ENCODE measurements at regions of chr6 and their contacts with region 1.

Region 1: GRCh38 chr6:87393022-87393622 is 14.7 kb upstream of the CFAP206 start:
- DNase-seq: peak; percentile 49
- H3K4me3 Mint-ChIP-seq: no peak overlapping the region
- H3K27ac Mint-ChIP-seq: no peak overlapping the region
- H3K4me1 Mint-ChIP-seq: no peaks in the 10 kb centered on the region
- H3K27me3 Mint-ChIP-seq: no peaks in the 10 kb centered on the region

Region 2: GRCh38 chr6:87066449-87067333 is 326.4 kb before region 1 on chr6:
- CTCF ChIA-PET with region 1: interaction called, 4 read pairs
- POLR2A ChIA-PET with region 1: interaction called, 3 read pairs
- intact Hi-C with region 1: loop called (anchors 5 kb)
- DNase-seq: peak; percentile 51
- H3K4me3 Mint-ChIP-seq: no peak overlapping the region
- H3K27ac Mint-ChIP-seq: no peak overlapping the region
- H3K4me1 Mint-ChIP-seq: peaks cover 2% of the 10 kb centered on the region
- H3K27me3 Mint-ChIP-seq: peaks cover 2% of the 10 kb centered on the region

Region 3: DNA sequence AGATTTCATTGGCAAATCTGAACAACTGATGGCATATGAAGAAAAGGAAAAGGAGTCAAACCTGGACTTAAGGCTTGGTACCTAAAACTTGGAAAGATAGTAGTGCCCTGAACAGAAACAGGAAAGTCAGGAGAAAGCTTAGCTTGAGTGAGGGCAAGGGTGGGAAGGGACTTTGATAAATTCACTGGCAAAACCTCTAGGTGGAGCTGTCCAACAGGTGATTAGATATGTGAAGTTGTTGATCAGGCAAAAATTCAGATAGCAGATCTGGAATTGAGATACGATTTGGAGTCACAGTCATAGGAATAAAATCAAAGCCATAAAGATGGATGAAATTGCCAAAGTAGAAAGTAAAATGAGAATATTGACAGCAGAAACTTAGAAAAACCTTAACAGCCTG is 253.9 kb before region 1 on chr6:
- CTCF ChIA-PET with region 1: interaction called, 18 read pairs
- POLR2A ChIA-PET with region 1: no interaction called
- intact Hi-C with region 1: loop called (anchors 1 kb)
- DNase-seq: no peak
- H3K4me3 Mint-ChIP-seq: no peak overlapping the region
- H3K27ac Mint-ChIP-seq: no peak overlapping the region
- H3K4me1 Mint-ChIP-seq: peaks cover 2% of the 10 kb centered on the region
- H3K27me3 Mint-ChIP-seq: peaks cover 4% of the 10 kb centered on the region

Region 4: DNA sequence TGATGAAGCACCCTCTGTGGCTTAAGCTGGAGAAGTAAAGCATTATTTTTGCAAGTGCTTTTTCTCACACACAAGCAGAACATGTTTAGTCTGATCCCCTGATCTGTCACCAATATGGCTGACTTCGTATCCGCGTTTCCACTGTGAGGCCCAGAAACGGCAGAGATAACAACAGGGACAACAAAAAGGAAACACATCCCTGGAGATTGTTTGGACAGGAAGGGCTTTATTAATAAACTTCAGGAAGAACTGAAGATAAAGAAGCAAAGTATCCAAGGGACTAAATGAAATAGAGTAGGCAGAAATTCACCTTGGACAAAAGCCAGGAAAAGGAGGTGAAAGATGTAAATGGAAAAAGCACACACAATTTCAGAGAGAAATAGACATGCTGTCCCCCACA is 147.4 kb after region 1 on chr6:
- CTCF ChIA-PET with region 1: no interaction called
- POLR2A ChIA-PET with region 1: no interaction called
- intact Hi-C with region 1: no loop called
- DNase-seq: no peak
- H3K4me3 Mint-ChIP-seq: no peak overlapping the region
- H3K27ac Mint-ChIP-seq: no peak overlapping the region
- H3K4me1 Mint-ChIP-seq: no peaks in the 10 kb centered on the region
- H3K27me3 Mint-ChIP-seq: no peaks in the 10 kb centered on the region

Region 5: GRCh38 chr6:87697581-87698552 is 304.7 kb after region 1 on chr6:
- CTCF ChIA-PET with region 1: no interaction called
- POLR2A ChIA-PET with region 1: no interaction called
- intact Hi-C with region 1: no loop called
- DNase-seq: no peak
- H3K4me3 Mint-ChIP-seq: peak overlapping the region; percentile 86
- H3K27ac Mint-ChIP-seq: peak overlapping the region; percentile 65
- H3K4me1 Mint-ChIP-seq: peaks cover 56% of the 10 kb centered on the region
- H3K27me3 Mint-ChIP-seq: no peaks in the 10 kb centered on the region

Region 6: GRCh38 chr6:87742106-87742505 is 349.0 kb after region 1 on chr6:
- CTCF ChIA-PET with region 1: no interaction called
- POLR2A ChIA-PET with region 1: no interaction called
- intact Hi-C with region 1: no loop called
- DNase-seq: peak; percentile 90
- H3K4me3 Mint-ChIP-seq: peak overlapping the region; percentile 16
- H3K27ac Mint-ChIP-seq: peak overlapping the region; percentile 82
- H3K4me1 Mint-ChIP-seq: peaks cover 44% of the 10 kb centered on the region
- H3K27me3 Mint-ChIP-seq: no peaks in the 10 kb centered on the region

Region 7: DNA sequence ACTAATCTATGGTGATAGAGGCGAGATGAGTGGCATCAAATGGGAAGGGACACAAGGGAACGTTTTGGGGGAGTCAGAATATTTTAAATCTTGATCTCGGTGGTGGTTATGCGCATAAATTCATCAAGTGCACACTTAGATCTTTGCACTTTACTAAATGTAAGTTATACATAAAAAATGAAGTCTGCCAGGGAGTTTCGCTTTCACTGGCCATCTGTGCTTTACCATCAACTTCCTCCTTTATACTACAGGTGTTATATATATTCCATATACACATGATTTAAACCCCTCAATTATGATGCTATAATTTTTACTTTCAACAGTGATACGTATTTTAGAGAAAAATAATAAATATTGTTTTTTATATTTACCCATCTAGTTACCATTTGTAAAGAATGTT is 406.5 kb after region 1 on chr6:
- CTCF ChIA-PET with region 1: no interaction called
- POLR2A ChIA-PET with region 1: no interaction called
- intact Hi-C with region 1: loop called (anchors 2 kb)
- DNase-seq: no peak
- H3K4me3 Mint-ChIP-seq: no peak overlapping the region
- H3K27ac Mint-ChIP-seq: no peak overlapping the region
- H3K4me1 Mint-ChIP-seq: peaks cover 3% of the 10 kb centered on the region
- H3K27me3 Mint-ChIP-seq: peaks cover 2% of the 10 kb centered on the region

Region 8: DNA sequence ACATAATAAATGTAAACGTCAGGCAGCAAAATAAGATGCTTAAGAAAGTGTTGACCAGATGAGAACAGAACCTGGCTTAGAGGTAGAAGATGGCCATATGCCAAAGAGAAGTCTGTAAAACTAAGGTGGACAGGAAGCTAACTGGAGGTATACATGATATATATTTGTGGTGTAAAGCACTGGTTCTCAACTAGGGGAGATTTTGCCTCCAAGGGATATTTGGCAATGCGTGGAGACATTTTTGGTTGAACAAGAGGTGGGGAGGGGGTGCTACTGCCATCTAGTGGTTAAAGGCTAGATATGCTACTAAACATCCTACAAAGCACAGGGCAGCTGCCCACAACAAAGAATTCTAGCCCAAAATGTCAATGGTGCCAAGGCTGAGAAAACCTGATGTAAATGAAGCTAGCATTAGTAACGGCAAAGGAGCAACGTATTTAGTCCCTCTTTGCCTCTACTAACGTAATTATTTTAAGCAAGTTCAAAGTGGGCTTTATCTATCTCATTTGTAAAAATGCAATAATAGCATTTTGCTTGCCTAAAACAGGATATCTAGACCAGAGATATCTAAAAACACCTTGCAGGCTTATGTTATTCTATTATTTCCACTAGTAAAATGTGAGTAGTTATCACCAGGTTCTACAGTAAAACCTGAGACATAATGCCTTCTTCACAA is 1387.7 kb after region 1 on chr6:
- CTCF ChIA-PET with region 1: no interaction called
- POLR2A ChIA-PET with region 1: no interaction called
- intact Hi-C with region 1: loop called (anchors 1 kb)
- DNase-seq: peak; percentile 55
- H3K4me3 Mint-ChIP-seq: no peak overlapping the region
- H3K27ac Mint-ChIP-seq: no peak overlapping the region
- H3K4me1 Mint-ChIP-seq: peaks cover 13% of the 10 kb centered on the region
- H3K27me3 Mint-ChIP-seq: no peaks in the 10 kb centered on the region